GM12878 (cell line): ENCODE measurements at regions of chr17 and their contacts with region 1.

Region 1: DNA sequence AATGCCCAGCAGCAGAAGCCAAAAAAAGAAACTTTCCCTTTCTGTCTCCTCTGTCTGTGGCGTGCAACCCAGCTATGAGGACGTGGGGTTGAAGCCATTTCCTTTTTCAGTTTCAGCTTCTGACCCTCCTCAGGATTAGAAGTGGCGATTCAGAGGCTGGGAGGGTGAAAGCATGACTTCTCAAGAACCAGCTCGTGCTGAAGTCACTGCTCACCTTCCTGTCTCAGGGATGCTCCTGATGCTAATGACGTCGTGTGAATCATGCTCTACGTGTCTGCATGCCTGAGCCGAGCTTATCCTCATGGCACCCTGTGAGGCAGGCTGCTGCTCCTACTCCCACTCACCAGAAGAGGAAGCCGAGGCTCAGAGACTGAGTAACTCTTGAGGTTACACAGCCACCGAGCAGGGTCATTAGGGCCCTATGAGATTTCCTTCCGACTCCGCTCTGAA is 5.7 kb upstream of the LPO start:
- DNase-seq: peak; percentile 87
- ATAC-seq: peak; percentile 92
- H3K4me3 ChIP-seq: peak overlapping the region; percentile 11; the same call in 1 of the 2 replicates
- H3K27ac ChIP-seq: peak overlapping the region; percentile 67
- H3K4me1 ChIP-seq: peaks cover 21% of the 10 kb centered on the region
- H3K27me3 ChIP-seq: no peaks in the 10 kb centered on the region; a peak in 1 of 4 replicates
- CTCF ChIP-seq: peak; percentile 6 to 24 (median 20); a peak in 1 of 6 replicates
- EP300 ChIP-seq: 0 out of 4 replicates have a peak, but pooled peaks of 1 of the 2 experiments have one; percentile 19
- POLR2A ChIP-seq: peak; percentile 56
- RAD21 ChIP-seq: 0 out of 2 replicates have a peak, but pooled peaks have one; percentile 12

Region 2: GRCh38 chr17:58219001-58219788 is 13.5 kb before region 1 on chr17 and contains the start of gene MKS1:
- CTCF ChIA-PET with region 1: interaction called, 65 read pairs
- POLR2A ChIA-PET with region 1: interaction called, 25 read pairs
- RAD21 ChIA-PET with region 1: interaction called, 9 read pairs
- SMC1A ChIA-PET with region 1: interaction called, 26 read pairs
- in situ Hi-C with region 1: no loop called
- intact Hi-C with region 1: no loop called
- DNase-seq: peak; percentile 84
- ATAC-seq: peak; percentile 100
- H3K4me3 ChIP-seq: peak within 1 kb of the TSS; percentile 69
- H3K27ac ChIP-seq: peak within 1 kb of the TSS; percentile 63
- H3K4me1 ChIP-seq: peaks cover 12% of the 10 kb centered on the region
- H3K27me3 ChIP-seq: no peaks in the 10 kb centered on the region
- CTCF ChIP-seq: peak; percentile 73 to 83 (median 78)
- EP300 ChIP-seq: peak; percentile 14 to 34; a peak in 1 of 4 replicates
- POLR2A ChIP-seq: peak; percentile 94
- RAD21 ChIP-seq: 0 out of 2 replicates have a peak, but pooled peaks have one; percentile 6
- polyA plus RNA-seq, gene MKS1: 5.7 to 7.2 TPM

Region 3: DNA sequence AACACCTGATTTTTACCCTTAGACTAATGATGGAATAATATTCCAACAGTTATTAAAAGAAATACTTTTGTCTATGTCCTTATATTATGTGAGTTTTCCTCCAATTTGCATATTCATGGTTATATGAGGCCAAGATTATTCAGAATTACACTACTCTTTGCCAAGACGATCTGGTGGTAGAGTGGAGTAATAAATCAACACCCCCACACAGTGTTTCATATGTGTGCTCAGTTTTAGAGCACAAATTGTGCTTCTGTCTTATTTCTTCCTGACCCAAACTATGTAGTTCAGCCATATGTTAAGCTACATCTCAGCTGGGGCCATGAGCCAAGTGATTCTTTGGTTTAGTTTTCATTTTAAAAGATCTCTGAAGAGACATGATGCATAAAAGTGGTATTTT is 496.1 kb after region 1 on chr17:
- CTCF ChIA-PET with region 1: no interaction called
- POLR2A ChIA-PET with region 1: no interaction called
- RAD21 ChIA-PET with region 1: no interaction called
- SMC1A ChIA-PET with region 1: no interaction called
- in situ Hi-C with region 1: no loop called
- intact Hi-C with region 1: no loop called
- DNase-seq: no peak
- ATAC-seq: no peak
- H3K4me3 ChIP-seq: no peak overlapping the region
- H3K27ac ChIP-seq: no peak overlapping the region
- H3K4me1 ChIP-seq: no peaks in the 10 kb centered on the region
- H3K27me3 ChIP-seq: no peaks in the 10 kb centered on the region
- CTCF ChIP-seq: no peak
- EP300 ChIP-seq: no peak
- POLR2A ChIP-seq: no peak
- RAD21 ChIP-seq: no peak